ENCODE measurements at regions of chr12 and their contacts with region 1.

Region 1: GRCh38 chr12:2812290-2813213 is at the start of gene ITFG2:
- DNase-seq: peak; percentile 87
- H3K4me3 ChIP-seq: peak within 1 kb of the TSS; percentile 72
- CTCF ChIP-seq: no peak

Region 2: DNA sequence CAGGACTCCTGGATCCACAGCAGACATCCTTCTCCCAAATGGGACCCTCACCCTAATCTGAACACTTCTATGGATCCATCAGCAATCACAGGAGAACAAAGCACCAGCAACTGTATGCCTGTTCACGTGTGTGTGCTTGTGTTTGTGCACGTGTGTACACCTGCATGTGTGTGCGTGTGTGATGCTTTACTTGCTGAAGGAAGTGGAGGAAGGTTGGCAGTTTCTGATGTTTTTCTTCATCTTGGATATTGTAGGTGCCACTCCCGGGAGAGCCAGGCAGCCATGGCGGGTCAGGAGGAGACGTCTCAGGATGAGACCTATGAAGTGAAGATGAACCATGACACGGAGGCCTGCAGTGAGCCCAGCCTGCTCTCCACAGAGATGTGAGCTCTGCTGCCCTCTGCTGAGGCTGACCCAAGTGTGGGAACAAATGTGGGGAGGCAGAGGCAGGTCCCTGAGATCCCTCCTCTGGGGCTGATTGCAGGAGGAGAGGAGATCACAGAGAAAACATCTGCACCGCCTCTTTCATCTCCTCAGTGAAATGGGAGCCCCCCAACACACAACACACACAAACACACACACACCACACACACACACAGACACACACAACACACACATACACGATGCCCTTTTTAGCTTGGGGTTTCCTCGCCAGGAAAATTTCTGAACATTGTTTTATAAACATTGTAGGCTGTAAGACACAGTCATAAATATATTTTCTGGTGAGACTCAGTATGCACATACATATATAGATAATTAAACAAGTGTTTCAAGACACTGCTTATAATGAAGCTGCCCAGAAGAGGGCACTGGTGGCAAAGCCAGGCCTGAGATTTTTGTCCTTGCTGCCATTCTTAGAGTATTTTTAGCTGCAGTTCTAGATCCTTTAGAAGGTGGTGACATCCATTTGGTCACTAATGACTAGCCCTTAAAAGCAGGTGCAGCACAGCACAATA is 130.0 kb before region 1 on chr12:
- CTCF ChIA-PET with region 1: interaction called, 15 read pairs
- POLR2A ChIA-PET with region 1: no interaction called
- DNase-seq: no peak
- H3K4me3 ChIP-seq: no peak overlapping the region
- CTCF ChIP-seq: peak; percentile 50

Region 3: DNA sequence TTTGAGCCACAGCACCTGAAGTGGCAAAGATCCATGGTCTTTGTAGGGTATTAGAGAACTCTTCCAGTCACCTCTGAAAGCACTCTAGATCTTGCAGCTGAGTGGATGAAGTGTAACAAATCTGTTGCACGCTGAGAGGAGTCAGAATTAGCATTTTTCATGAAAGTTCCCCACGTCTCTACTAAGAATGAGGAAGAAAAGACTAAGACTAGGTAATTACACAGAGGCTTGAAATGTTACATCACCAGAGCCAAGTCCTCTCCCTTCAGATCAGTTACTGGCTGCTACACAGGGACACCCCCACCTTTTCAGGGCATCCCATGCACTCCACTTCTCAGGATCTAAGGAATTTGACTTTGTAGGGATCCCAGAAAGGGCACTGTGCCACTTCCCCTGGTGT is 116.4 kb before region 1 on chr12:
- CTCF ChIA-PET with region 1: no interaction called
- POLR2A ChIA-PET with region 1: no interaction called
- DNase-seq: no peak
- H3K4me3 ChIP-seq: no peak overlapping the region
- CTCF ChIP-seq: no peak

Region 4: GRCh38 chr12:2739817-2740641 is 72.5 kb before region 1 on chr12:
- CTCF ChIA-PET with region 1: interaction called, 14 read pairs
- POLR2A ChIA-PET with region 1: no interaction called
- DNase-seq: no peak
- H3K4me3 ChIP-seq: no peak overlapping the region
- CTCF ChIP-seq: peak; percentile 55

Region 5: DNA sequence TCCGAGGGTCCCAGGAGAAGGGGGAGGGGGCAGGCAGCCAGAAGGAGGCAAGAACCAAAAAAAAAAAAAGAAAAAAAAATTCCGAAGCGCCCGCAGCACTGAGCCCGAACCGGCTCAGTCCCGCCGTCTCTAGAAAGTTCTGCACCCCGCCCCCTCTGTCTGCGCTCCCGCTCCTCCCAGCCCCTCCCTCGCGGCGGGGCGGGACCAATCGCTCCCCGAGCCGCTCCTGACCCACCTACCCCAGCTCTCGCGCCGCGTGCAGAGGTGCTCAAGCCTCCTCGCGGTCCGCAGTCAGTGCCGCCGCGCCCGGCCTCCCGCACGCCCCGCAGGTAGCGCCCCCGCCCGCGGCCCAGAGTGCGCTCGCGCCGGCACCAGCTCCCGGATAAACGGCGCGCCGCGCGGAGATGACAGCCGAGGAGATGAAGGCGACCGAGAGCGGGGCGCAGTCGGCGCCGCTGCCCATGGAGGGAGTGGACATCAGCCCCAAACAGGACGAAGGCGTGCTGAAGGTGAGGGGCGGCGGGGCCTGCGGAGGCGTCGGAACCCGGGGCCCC is 17.7 kb before region 1 on chr12 and contains the start of gene FKBP4:
- CTCF ChIA-PET with region 1: interaction called, 13 read pairs
- POLR2A ChIA-PET with region 1: interaction called, 3 read pairs
- DNase-seq: no peak
- H3K4me3 ChIP-seq: peak within 1 kb of the TSS; percentile 87
- CTCF ChIP-seq: no peak

Region 6: GRCh38 chr12:2826721-2827515 is 14.4 kb after region 1 on chr12:
- CTCF ChIA-PET with region 1: interaction called, 15 read pairs
- POLR2A ChIA-PET with region 1: no interaction called
- DNase-seq: no peak
- H3K4me3 ChIP-seq: no peak overlapping the region
- CTCF ChIP-seq: no peak

Region 7: DNA sequence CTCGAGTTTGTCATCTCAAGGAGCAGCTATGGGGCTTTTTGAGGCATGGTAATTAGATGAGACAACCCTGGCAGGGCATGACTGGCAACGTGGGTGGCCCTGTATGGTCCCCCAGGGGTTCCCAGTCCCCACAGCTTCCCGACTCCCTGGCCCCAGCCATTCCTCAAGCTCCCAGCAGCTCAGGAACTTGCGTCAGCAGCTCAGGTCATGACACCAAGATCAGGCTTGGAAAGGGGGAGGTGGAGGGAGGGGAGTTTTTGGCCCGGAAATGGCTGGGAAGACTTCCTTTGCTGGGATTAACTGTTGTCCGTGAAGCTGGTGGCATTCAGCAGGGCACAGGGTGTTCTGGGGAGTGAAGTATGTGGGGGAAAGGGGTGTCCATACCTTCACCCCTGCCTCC is 32.7 kb after region 1 on chr12:
- CTCF ChIA-PET with region 1: interaction called, 10 read pairs
- POLR2A ChIA-PET with region 1: no interaction called
- DNase-seq: peak; percentile 34
- H3K4me3 ChIP-seq: no peak overlapping the region
- CTCF ChIP-seq: no peak

Measured in AG04449 (cell line).